ENCODE measurements at regions of chr9 and their contacts with region 1.

Region 1: DNA sequence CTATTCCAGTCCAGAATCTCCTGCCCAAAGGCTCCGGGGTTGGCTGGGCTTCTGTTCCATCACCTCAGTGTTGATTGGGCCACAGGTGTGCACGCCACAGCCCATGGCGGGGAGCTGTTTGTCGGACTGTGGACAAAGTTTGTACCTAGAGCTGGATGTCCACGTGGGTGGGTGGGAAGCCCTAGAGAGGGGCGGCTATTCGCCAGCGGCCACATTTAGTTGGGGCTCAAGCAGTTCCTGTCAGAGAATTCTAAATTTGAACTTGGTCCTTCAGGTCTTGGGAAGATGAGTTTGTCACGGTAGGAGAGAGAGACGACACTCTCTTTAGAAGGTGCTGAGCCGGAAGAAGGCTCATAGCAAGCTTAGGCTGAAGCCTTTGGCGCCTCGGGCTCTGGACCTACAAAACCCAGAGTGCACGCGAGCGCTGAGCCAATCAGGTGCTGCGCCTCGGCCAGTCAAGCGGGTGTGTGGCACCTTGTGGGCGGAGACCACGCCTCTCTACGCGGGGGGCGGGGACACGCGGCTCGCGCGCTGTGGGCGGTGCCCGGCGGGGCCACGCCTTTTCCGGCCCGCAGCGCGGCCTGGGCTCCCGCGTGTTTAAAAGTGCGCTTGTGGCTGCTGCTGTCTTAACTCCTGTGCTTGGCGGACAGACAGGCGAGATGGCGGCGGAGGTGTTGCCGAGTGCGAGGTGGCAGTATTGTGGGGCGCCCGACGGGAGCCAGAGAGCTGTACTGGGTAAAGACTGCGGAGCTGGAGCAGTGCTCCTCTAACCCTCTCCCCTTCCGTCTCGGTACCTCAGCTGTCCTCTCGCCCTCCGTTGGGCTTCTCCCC is at the start of gene POLR1E:
- DNase-seq: peak; percentile 85
- ATAC-seq: peak; percentile 95
- H3K4me3 ChIP-seq: peak within 1 kb of the TSS; percentile 100
- H3K27ac ChIP-seq: peak within 1 kb of the TSS; percentile 71
- H3K4me1 ChIP-seq: peaks cover 14% of the 10 kb centered on the region
- H3K27me3 ChIP-seq: 0 out of 4 replicates have a peak, but pooled peaks cover 0 to 2% of the 10 kb centered on the region in 2 experiments
- CTCF ChIP-seq: no peak
- EP300 ChIP-seq: no peak; a peak in 1 of 4 replicates
- POLR2A ChIP-seq: peak; percentile 99
- RAD21 ChIP-seq: no peak
- polyA plus RNA-seq, gene POLR1E: 13.7 to 27.6 TPM

Region 2: GRCh38 chr9:37441776-37442370 is 43.7 kb before region 1 on chr9:
- CTCF ChIA-PET with region 1: no interaction called
- POLR2A ChIA-PET with region 1: no interaction called
- RAD21 ChIA-PET with region 1: no interaction called
- SMC1A ChIA-PET with region 1: no interaction called
- in situ Hi-C with region 1: no loop called
- intact Hi-C with region 1: no loop called
- DNase-seq: no peak
- ATAC-seq: no peak
- H3K4me3 ChIP-seq: no peak overlapping the region
- H3K27ac ChIP-seq: no peak overlapping the region
- H3K4me1 ChIP-seq: no peaks in the 10 kb centered on the region
- H3K27me3 ChIP-seq: no peaks in the 10 kb centered on the region
- CTCF ChIP-seq: no peak
- EP300 ChIP-seq: no peak
- POLR2A ChIP-seq: peak; percentile 54; the same call in 1 of the 2 replicates
- RAD21 ChIP-seq: no peak

Region 3: GRCh38 chr9:37496020-37496419 is 10.4 kb after region 1 on chr9:
- CTCF ChIA-PET with region 1: interaction called, 8 read pairs
- POLR2A ChIA-PET with region 1: interaction called, 7 read pairs
- RAD21 ChIA-PET with region 1: interaction called, 4 read pairs
- SMC1A ChIA-PET with region 1: interaction called, 11 read pairs
- in situ Hi-C with region 1: no loop called
- intact Hi-C with region 1: no loop called
- DNase-seq: no peak
- ATAC-seq: no peak; the same call in 2 of the 3 replicates
- H3K4me3 ChIP-seq: no peak overlapping the region
- H3K27ac ChIP-seq: no peak overlapping the region
- H3K4me1 ChIP-seq: no peaks in the 10 kb centered on the region
- H3K27me3 ChIP-seq: no peaks in the 10 kb centered on the region
- CTCF ChIP-seq: no peak
- EP300 ChIP-seq: no peak
- POLR2A ChIP-seq: no peak
- RAD21 ChIP-seq: no peak

Region 4: GRCh38 chr9:37575921-37576721 is 90.5 kb after region 1 on chr9 and contains the start of gene FBXO10:
- CTCF ChIA-PET with region 1: interaction called, 10 read pairs
- POLR2A ChIA-PET with region 1: interaction called, 6 read pairs
- RAD21 ChIA-PET with region 1: interaction called, 18 read pairs
- SMC1A ChIA-PET with region 1: interaction called, 21 read pairs
- in situ Hi-C with region 1: no loop called
- intact Hi-C with region 1: loop called (anchors 5 kb)
- DNase-seq: no peak
- ATAC-seq: peak; percentile 87
- H3K4me3 ChIP-seq: peak within 1 kb of the TSS; percentile 89
- H3K27ac ChIP-seq: peak within 1 kb of the TSS; percentile 78
- H3K4me1 ChIP-seq: peaks cover 5% of the 10 kb centered on the region
- H3K27me3 ChIP-seq: no peaks in the 10 kb centered on the region
- CTCF ChIP-seq: no peak
- EP300 ChIP-seq: 0 out of 4 replicates have a peak, but pooled peaks of 1 of the 2 experiments have one; percentile 6
- POLR2A ChIP-seq: peak; percentile 74
- RAD21 ChIP-seq: 0 out of 2 replicates have a peak, but pooled peaks have one; percentile 6
- polyA plus RNA-seq, gene FBXO10: 1.6 to 1.9 TPM

Region 5: DNA sequence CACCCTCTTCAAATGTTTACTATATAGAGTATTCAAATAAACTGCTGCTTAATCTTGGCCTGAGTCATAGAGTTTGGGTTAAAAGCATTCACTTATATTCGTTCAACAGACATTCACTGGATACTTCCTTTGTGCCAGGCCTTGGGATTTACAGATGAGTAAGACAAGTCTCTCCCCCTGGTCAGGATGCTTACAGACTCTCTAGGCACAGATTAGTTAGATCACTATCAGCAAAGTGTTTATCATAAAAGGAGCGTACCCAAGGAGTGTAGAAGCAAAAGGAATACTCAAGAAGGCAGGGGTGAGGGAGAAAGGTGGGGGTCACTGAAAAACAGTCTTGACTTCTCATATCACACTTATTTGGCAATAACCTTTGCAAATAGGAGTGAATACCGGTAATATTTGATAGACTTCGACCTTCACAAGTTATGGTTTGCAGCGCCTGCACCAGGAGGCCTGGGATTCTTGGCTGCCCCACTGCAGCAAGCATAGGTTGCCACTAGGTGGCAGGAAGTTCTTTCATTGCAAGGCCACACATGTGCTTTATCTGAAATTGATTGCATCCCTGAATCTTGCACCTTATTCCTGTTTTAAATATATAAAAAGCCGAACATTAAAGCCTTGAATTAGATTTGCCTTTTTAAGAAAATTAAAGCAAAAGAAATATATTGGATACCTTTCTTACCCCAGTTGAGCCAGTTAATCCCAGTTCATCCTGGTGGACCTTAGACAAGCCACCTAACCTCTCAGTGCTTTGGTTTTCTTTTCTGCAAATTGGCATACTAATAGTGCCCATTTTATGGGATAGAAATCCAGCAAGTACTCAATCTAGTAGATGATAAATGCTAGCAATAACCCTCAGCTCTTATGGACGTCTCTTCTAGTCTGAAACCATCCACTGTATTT is 261.5 kb after region 1 on chr9:
- CTCF ChIA-PET with region 1: interaction called, 7 read pairs
- POLR2A ChIA-PET with region 1: no interaction called
- RAD21 ChIA-PET with region 1: interaction called, 4 read pairs
- SMC1A ChIA-PET with region 1: no interaction called
- in situ Hi-C with region 1: no loop called
- intact Hi-C with region 1: loop called (anchors 2 kb)
- DNase-seq: peak; percentile 3
- ATAC-seq: peak; percentile 97
- H3K4me3 ChIP-seq: no peak overlapping the region
- H3K27ac ChIP-seq: no peak overlapping the region
- H3K4me1 ChIP-seq: no peaks in the 10 kb centered on the region
- H3K27me3 ChIP-seq: no peaks in the 10 kb centered on the region
- CTCF ChIP-seq: peak; percentile 93 to 97 (median 96)
- EP300 ChIP-seq: no peak
- POLR2A ChIP-seq: no peak
- RAD21 ChIP-seq: peak; percentile 86

Region 6: DNA sequence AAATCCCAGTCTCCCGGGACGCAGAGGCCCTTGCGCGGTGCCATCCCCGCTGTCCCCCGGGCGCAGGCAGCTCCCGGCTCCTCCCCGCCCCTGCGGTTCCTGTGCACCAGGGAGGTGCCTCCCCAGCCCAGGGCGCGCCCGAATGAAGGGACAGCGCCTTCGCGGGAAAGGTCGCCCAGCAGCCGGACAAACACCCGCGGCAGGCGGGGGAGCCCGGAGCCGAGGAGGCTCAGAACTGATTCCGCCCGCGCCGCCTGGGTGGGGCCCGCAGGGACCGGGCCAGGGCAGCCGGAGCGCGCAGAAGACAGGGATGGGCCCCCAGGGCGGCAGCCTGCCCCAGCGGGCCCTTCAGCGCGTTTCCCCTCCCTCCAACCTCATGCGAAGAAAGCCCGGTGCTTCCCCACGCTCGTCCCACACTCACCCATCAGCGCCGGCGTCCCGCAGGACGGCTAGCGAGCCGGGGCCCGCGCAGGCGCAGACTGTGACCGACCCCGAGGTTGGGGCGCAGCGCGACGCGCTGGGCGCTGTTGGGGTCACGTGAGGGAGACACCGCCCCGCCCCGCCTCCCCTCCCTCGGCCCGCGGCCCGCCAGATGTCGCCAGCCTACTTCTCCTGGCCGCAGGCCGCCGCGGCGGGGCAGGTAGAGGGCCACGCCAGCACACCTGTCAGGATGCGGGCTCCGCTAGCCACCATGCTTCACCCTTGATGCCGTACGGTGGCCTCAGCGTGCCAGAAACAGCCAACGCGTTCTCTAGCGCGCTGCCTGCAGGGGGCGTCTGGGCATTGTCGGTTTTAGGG is 418.2 kb after region 1 on chr9 and contains the start of gene SLC25A51:
- CTCF ChIA-PET with region 1: interaction called, 10 read pairs
- POLR2A ChIA-PET with region 1: no interaction called
- RAD21 ChIA-PET with region 1: interaction called, 4 read pairs
- SMC1A ChIA-PET with region 1: interaction called, 10 read pairs
- in situ Hi-C with region 1: loop called (anchors 5 kb)
- intact Hi-C with region 1: loop called (anchors 5 kb)
- DNase-seq: peak; percentile 81
- ATAC-seq: peak; percentile 92
- H3K4me3 ChIP-seq: peak within 1 kb of the TSS; percentile 86
- H3K27ac ChIP-seq: peak within 1 kb of the TSS; percentile 76
- H3K4me1 ChIP-seq: peaks cover 10% of the 10 kb centered on the region
- H3K27me3 ChIP-seq: no peaks in the 10 kb centered on the region
- CTCF ChIP-seq: peak; percentile 91 to 97 (median 95); a peak in 5 of 6 replicates
- EP300 ChIP-seq: peak in 1 of 2 experiments; percentile 59; a peak in 1 of 4 replicates
- POLR2A ChIP-seq: peak; percentile 88
- RAD21 ChIP-seq: peak; percentile 72
- polyA plus RNA-seq, gene SLC25A51: 3.8 to 6.1 TPM

Region 7: GRCh38 chr9:38183994-38184568 is 698.5 kb after region 1 on chr9:
- CTCF ChIA-PET with region 1: no interaction called
- POLR2A ChIA-PET with region 1: no interaction called
- RAD21 ChIA-PET with region 1: no interaction called
- SMC1A ChIA-PET with region 1: no interaction called
- in situ Hi-C with region 1: no loop called
- intact Hi-C with region 1: no loop called
- DNase-seq: no peak
- ATAC-seq: no peak
- H3K4me3 ChIP-seq: no peak overlapping the region
- H3K27ac ChIP-seq: no peak overlapping the region
- H3K4me1 ChIP-seq: peaks cover 14% of the 10 kb centered on the region
- H3K27me3 ChIP-seq: peaks cover 0 to 2% of the 10 kb centered on the region in 2 experiments; a peak in 1 of 4 replicates
- CTCF ChIP-seq: no peak
- EP300 ChIP-seq: no peak
- POLR2A ChIP-seq: no peak
- RAD21 ChIP-seq: no peak

Measured in GM12878 (cell line).